Activated T-helper 1 cell treated with anti-CD3 and anti-CD28 coated beads, Interleukin-12 subunit alpha, Interleukin-12 subunit beta, Interleukin-2, Interleukin-4 antibody, amounts not matched to agents 30 ng/mL and 10 ng/mL and 1 ng/mL, durations not matched to agents 14 hours and 24 hours and 36 hours (primary cell): ENCODE measurements at regions of chr2 and their contacts with region 1.

Region 1: DNA sequence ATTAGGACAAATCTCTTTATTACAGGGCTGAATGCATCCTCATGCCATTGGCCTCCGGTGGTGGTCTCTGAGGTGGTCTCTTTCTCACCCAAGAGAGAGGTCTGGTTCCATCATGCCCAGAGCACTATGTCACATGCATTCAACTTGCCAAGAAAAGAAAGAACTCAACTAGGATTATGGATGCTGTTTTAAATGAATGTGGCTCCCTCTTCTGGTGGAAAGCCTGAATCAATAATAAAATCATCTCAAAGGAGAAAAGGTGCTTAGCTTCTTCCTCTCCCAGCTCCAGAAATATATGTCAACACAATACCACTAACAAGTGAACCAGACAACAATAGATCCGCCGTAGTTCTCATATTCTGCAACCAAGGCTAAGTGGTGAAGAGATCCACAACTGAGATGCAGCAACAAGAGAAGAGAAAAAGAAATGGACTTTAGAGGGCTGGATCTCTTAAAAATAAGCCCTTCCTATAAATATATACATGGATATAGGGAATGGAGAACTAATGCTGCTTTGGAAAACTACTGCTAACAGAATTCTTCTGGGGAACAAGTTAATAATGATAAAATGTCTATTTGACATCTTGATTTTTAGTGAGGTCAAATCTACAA is 396.8 kb downstream of the NCKAP5 start:
- DNase-seq: no peak
- H3K4me3 Mint-ChIP-seq: no peak overlapping the region
- H3K27ac Mint-ChIP-seq: no peak overlapping the region
- H3K4me1 Mint-ChIP-seq: no peaks in the 10 kb centered on the region
- H3K27me3 Mint-ChIP-seq: no peaks in the 10 kb centered on the region

Region 2: DNA sequence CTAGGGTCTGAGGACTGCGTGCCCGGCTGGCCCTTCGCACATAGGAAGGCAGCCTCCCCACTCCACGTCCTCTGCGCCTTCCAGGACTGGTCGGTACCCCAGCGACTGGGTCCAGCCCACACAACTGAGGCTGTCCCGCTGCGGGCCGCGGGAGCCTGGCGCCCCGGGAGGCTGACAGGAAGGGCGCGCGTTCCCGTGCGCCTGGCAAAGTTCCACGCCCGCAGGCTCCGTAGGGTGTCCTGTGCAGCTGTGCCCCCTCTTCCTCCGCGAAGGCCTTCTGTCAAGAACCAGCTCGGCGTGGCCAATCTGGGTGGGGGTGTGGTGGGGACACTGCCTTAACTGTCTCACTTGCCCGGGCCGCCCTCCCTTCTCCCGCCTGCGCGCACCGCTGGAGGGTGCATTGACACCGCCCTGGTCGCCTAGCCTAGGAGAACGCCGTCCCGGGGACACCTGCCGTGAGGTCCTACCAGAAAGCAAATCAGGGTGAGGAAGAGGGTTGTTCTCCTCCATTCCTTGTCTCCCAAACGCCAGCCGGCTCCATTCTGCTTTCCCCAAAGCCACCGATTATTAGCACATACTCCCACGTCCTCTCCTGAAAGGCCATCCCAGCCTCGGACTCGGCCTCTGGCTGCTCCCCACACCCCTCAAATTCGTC is 500.9 kb before region 1 on chr2:
- intact Hi-C with region 1: loop called (anchors 10 kb)
- DNase-seq: no peak
- H3K4me3 Mint-ChIP-seq: no peak overlapping the region
- H3K27ac Mint-ChIP-seq: no peak overlapping the region
- H3K4me1 Mint-ChIP-seq: no peaks in the 10 kb centered on the region
- H3K27me3 Mint-ChIP-seq: peaks cover 35% of the 10 kb centered on the region